Endothelial cell of umbilical vein (primary cell): ENCODE measurements at regions of chr15 and their contacts with region 1.

Region 1: DNA sequence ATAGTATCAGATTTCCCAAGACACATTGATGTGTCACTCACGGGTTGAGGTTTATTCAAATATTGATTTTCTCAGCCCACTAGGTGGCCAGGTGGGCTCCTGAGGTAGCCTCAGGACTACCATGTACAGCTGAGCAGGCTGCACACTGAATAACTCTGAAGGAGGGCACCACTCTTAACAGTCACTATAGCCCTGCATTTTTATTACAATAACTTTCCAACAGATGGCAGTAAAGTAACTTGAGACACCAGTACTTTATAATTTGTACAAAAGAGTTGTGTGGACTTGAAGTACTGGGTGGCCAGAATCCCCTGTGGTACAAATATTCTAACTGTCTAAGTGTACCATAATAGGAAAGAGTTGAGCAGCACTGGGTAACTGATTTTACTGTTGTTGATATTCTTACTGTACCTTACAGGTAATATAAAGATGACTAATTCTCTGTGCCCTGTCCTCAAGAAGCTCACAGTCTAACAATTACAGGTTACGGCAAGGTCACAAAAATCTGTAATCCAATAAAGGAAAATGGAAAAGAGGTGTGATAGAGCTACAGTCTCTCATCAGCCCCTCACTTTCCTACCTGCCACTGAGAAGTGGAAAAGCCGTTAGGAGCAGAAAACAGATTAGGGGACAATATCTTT is 76.0 kb downstream of the ETFA start:
- DNase-seq: peak; percentile 54
- H3K4me3 ChIP-seq: no peak overlapping the region
- H3K27ac ChIP-seq: no peak overlapping the region
- H3K4me1 ChIP-seq: no peaks in the 10 kb centered on the region
- H3K27me3 ChIP-seq: no peaks in the 10 kb centered on the region
- CTCF ChIP-seq: peak; percentile 22 to 24
- POLR2A ChIP-seq: no peak

Region 2: GRCh38 chr15:76177491-76178040 is 57.7 kb before region 1 on chr15:
- CTCF ChIA-PET with region 1: no interaction called
- POLR2A ChIA-PET with region 1: no interaction called
- dilution Hi-C with region 1: no loop called
- intact Hi-C with region 1: no loop called
- DNase-seq: no peak
- H3K4me3 ChIP-seq: no peak overlapping the region
- H3K27ac ChIP-seq: no peak overlapping the region
- H3K4me1 ChIP-seq: no peaks in the 10 kb centered on the region
- H3K27me3 ChIP-seq: peaks cover 0 to 7% of the 10 kb centered on the region in 2 experiments
- CTCF ChIP-seq: no peak
- POLR2A ChIP-seq: no peak

Region 3: DNA sequence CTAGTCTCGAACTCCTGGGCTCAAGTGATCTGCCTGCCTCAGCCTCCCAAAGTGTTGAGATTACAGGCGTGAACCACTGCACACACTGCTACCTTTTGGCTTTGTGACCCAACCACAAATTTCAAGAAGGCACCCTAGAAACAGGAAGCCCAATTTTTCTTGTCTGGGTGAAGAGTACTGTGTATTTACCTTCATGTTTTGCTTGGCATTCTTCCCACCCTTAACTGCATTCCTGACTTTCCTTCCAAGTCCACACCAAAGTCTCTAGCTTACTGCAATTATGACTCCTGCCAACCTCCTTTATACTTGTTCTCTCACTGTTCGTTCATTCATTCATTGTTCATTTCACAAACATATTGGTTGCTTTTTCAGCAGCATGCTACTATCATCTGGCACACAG is 18.3 kb before region 1 on chr15:
- CTCF ChIA-PET with region 1: no interaction called
- POLR2A ChIA-PET with region 1: no interaction called
- dilution Hi-C with region 1: no loop called
- intact Hi-C with region 1: no loop called
- DNase-seq: peak; percentile 18
- H3K4me3 ChIP-seq: no peak overlapping the region
- H3K27ac ChIP-seq: no peak overlapping the region
- H3K4me1 ChIP-seq: peaks cover 10% of the 10 kb centered on the region
- H3K27me3 ChIP-seq: no peaks in the 10 kb centered on the region
- CTCF ChIP-seq: no peak
- POLR2A ChIP-seq: no peak

Region 4: GRCh38 chr15:76285239-76285825 is 50.0 kb after region 1 on chr15:
- CTCF ChIA-PET with region 1: interaction called, 20 read pairs
- POLR2A ChIA-PET with region 1: no interaction called
- dilution Hi-C with region 1: no loop called
- intact Hi-C with region 1: loop called (anchors 10 kb)
- DNase-seq: peak; percentile 28
- H3K4me3 ChIP-seq: no peak overlapping the region
- H3K27ac ChIP-seq: no peak overlapping the region
- H3K4me1 ChIP-seq: no peaks in the 10 kb centered on the region
- H3K27me3 ChIP-seq: no peaks in the 10 kb centered on the region
- CTCF ChIP-seq: peak; percentile 37 to 55
- POLR2A ChIP-seq: no peak

Region 5: DNA sequence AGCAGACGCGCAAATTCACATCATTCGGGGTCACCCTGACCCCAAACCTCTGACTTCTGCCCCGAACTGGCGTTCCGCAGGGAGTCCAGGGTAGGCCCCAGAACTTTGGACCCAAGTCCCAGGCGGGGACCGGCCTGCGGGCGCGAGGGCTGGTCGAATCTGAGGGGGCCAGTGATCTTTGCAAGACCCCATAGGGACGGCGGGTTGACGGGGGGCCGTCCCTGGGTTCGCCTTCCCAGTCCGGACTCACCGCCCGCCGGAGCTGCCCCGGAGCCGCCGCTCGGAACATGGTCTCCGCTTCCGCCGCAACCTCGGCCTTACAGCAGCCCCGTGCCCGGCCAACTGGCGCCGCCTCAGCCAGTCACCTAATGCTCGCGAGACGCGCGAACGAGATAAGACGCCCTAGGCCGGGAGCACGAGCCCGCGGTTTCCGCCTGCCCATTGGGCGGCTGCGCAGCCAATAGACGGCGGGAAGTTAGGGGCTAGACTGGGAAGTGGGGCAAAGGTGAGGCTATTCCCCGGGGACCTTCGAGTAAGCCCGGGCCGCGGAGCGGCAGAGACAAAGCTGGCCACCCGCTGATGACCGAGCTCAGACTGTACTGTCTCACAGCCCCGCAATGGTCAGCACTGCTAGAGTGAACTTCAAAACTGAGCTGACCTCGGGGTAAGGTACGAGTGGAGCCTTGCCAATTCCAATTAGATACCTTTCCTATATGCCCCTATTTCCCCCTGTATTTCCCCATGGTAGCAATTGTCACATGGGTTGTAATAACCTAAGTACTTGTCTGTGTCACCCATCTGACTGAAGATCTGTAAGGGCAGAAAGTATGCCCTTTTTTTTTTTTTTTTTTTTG is 76.0 kb after region 1 on chr15 and contains the start of gene ETFA:
- CTCF ChIA-PET with region 1: no interaction called
- POLR2A ChIA-PET with region 1: no interaction called
- dilution Hi-C with region 1: no loop called
- intact Hi-C with region 1: loop called (anchors 5 kb)
- DNase-seq: peak; percentile 95
- H3K4me3 ChIP-seq: peak within 1 kb of the TSS; percentile 82 to 86 (median 84)
- H3K27ac ChIP-seq: peak within 1 kb of the TSS; percentile 78
- H3K4me1 ChIP-seq: peaks cover 19% of the 10 kb centered on the region
- H3K27me3 ChIP-seq: no peaks in the 10 kb centered on the region
- CTCF ChIP-seq: no peak
- POLR2A ChIP-seq: peak; percentile 88
- total RNA-seq, gene ETFA: 116 and 123 TPM in 2 replicates

Region 6: GRCh38 chr15:76330080-76330680 is 94.9 kb after region 1 on chr15:
- CTCF ChIA-PET with region 1: interaction called, 65 read pairs
- POLR2A ChIA-PET with region 1: no interaction called
- dilution Hi-C with region 1: no loop called
- intact Hi-C with region 1: loop called (anchors 1 kb)
- DNase-seq: peak; percentile 57
- H3K4me3 ChIP-seq: no peak overlapping the region
- H3K27ac ChIP-seq: no peak overlapping the region
- H3K4me1 ChIP-seq: no peaks in the 10 kb centered on the region
- H3K27me3 ChIP-seq: peaks cover 25 to 36% of the 10 kb centered on the region in 2 experiments
- CTCF ChIP-seq: peak; percentile 35 to 74
- POLR2A ChIP-seq: no peak

Region 7: DNA sequence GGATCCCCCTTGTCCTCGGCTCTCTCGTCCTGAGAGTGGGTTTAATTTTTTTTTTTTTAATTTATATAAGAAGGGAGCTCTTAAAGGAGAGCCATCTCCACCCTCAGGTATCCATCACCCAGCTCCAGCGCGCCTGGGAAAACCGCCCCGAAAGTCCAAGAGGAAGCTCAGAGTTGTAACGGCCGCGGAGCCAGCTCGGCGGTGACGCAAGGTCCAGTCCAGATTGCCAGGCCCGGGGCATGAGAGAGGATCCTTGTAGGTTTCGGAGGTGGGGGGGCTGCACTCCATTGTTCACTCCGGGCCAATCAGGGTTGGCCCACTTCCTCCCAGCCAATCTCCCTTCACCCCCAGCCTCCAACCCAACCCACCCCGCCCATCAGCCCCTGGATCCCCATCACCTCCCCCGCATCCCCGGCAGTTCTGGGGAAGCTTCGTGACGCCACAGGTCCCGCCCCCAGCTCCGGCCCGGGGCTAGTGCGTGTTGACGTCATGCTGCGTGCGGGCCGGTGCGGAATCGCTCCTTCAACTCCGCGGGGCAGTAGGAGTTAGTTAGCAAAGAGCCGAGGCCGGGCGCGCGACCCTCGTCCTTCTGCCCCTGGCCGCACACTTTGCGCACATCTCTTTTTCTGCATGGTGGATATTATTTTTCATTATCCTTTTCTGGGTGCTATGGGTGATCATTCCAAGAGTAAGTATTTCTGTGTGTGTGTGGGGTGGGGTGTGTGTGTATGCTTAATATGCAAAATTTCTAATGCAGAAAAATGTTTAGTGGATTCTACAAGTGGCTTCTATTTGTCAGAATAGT is 101.2 kb after region 1 on chr15 and contains the start of gene ISL2:
- CTCF ChIA-PET with region 1: interaction called, 18 read pairs
- POLR2A ChIA-PET with region 1: no interaction called
- dilution Hi-C with region 1: no loop called
- intact Hi-C with region 1: no loop called
- DNase-seq: peak; percentile 60
- H3K4me3 ChIP-seq: peak within 1 kb of the TSS in 2 of 3 experiments; percentile 28 to 52
- H3K27ac ChIP-seq: no peak within 1 kb of the TSS
- H3K4me1 ChIP-seq: peaks cover 20% of the 10 kb centered on the region
- H3K27me3 ChIP-seq: peaks cover 54 to 74% of the 10 kb centered on the region in 2 experiments
- CTCF ChIP-seq: no peak
- POLR2A ChIP-seq: peak; percentile 32
- total RNA-seq, gene ISL2: not detected in 2 replicates

Region 8: GRCh38 chr15:76840830-76841460 is 605.6 kb after region 1 on chr15:
- CTCF ChIA-PET with region 1: no interaction called
- POLR2A ChIA-PET with region 1: no interaction called
- dilution Hi-C with region 1: no loop called
- intact Hi-C with region 1: loop called (anchors 2 kb)
- DNase-seq: peak; percentile 51
- H3K4me3 ChIP-seq: no peak overlapping the region
- H3K27ac ChIP-seq: no peak overlapping the region
- H3K4me1 ChIP-seq: no peaks in the 10 kb centered on the region
- H3K27me3 ChIP-seq: no peaks in the 10 kb centered on the region
- CTCF ChIP-seq: peak; percentile 29 to 35
- POLR2A ChIP-seq: no peak

Region 9: DNA sequence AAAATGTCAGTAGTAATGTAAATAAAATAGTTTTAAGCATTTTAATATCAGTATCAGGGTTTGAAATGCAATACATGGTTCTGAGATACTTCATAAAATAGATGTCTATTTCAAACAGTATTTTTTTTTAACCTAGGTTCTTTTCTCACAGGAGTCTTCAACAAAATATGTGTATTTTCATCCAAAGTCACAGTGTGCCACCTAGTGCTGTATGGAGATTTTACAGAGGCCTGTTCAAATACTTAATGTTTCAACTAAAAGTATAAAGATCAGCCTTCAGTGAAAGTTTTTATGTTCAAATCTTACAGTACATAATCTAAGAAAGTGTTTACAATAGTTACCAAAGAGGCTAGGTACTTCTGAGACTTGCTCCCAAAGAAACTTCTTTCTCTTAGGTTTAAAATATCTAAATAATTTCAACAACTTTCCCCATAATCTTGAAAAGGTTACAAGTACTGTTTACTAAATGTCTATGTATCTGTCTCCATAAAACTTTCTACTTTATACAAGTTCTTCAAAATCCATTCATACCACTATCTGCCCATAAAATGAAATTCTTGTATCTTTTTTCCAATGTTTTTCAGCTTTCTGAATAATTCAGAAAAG is 631.5 kb after region 1 on chr15:
- CTCF ChIA-PET with region 1: interaction called, 12 read pairs
- POLR2A ChIA-PET with region 1: no interaction called
- dilution Hi-C with region 1: no loop called
- intact Hi-C with region 1: loop called (anchors 1 kb)
- DNase-seq: peak; percentile 64
- H3K4me3 ChIP-seq: no peak overlapping the region
- H3K27ac ChIP-seq: no peak overlapping the region
- H3K4me1 ChIP-seq: no peaks in the 10 kb centered on the region
- H3K27me3 ChIP-seq: no peaks in the 10 kb centered on the region
- CTCF ChIP-seq: peak; percentile 15 to 33
- POLR2A ChIP-seq: no peak